CD4-positive, alpha-beta T cell (primary cell): ENCODE measurements at regions of chr7 and their contacts with region 1.

Region 1: DNA sequence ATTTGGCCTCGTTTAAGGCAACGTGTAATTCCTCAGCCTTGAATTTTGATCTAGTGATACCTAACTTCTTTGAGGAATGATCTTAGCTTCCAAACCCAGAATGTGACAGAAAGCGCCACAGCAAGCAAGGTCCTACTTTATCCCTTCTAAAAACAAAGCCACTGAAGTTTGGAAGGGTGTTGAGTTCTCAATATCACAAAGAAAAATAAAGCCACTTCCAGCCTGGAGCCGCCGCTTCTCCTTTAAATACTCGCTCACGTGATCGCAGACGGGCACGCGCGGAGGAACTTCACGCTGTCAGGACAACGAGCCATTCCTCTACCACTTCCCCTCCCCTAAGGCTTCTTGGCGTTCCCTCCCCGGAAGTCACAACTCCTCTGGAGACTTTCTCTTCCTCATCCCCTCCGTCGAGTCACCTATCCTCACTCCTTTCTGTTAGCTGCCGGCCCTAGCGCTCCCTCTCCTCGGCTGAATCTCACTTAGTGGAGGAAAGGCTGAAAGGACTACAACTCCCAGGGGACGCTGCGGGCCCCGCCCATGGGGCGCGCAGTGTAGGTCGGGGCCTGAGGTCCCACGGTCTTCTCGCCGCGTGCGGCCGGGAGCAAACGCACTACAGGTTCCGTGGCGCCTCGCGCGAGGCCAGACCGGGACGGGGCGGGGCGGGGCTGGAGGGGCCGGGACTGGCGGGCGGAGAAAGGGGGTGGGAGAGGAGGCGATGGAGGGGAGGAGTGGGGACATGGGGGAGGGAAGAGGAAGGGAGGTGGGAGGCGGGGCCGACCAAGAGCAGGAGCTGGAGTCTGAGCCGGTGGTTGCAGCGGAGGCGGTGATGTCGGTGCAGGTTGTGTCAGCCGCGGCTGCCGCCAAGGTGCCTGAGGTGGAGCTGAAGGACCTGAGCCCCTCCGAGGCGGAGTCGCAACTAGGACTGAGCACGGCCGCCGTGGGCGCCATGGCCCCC is at the start of gene AHCYL2:
- DNase-seq: peak; percentile 96 to 99 (median 98)
- ATAC-seq: peak; percentile 89
- H3K4me3 ChIP-seq: peak within 1 kb of the TSS; percentile 91
- H3K4me3 Mint-ChIP-seq: peak within 1 kb of the TSS; percentile 96
- H3K27ac ChIP-seq: peak within 1 kb of the TSS; percentile 72 to 97
- H3K27ac Mint-ChIP-seq: peak within 1 kb of the TSS; percentile 89
- H3K4me1 ChIP-seq: peaks cover 25% of the 10 kb centered on the region
- H3K4me1 Mint-ChIP-seq: peaks cover 56% of the 10 kb centered on the region
- H3K27me3 ChIP-seq: no peaks in the 10 kb centered on the region
- H3K27me3 Mint-ChIP-seq: no peaks in the 10 kb centered on the region
- CTCF ChIP-seq: no peak
- total RNA-seq, gene AHCYL2: 5.8 to 6.0 TPM

Region 2: DNA sequence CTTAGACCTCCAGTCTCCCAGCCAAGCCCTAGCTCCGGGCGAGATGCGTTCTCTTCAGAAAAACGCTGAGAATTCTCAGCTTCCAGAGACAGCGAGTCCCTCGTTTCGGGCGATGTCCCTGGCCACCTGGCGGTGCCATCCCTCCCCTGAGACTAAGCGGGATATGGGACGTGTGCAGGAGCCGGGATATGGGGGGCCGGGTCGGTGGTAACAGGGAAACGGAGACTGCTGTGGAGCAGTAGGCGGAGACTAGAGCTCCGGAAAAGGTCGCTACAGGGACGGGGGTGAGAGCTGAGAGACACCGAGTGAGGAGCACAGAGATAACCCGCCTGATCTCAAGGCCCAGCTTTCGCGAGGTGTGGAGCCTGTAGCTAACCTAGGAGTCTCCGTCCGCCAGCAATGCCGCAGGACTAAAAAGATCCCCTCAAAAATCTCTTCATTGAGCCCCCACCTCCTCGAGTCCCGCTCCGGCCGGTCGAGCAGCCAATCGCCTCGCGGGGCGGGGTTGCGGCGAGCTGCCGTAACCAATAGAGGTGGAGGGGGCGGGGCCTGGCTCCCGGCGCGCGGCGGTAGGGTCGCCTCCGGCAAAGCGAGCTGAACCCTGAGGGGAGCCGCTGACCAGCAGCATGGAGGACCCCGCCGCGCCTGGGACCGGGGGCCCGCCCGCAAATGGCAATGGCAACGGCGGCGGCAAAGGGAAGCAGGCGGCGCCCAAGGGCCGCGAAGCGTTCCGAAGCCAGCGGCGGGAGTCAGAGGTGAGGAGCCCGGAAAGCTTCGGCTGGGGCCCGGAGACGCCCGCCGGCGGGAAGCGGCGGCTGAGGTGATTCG is 209.5 kb after region 1 on chr7 and contains the start of gene STRIP2:
- CTCF ChIA-PET with region 1: no interaction called
- POLR2A ChIA-PET with region 1: no interaction called
- intact Hi-C with region 1: loop called in 1 of 2 experiments (anchors 5 kb)
- DNase-seq: peak; percentile 68 to 92 (median 84)
- ATAC-seq: peak; percentile 94
- H3K4me3 ChIP-seq: peak within 1 kb of the TSS; percentile 88
- H3K4me3 Mint-ChIP-seq: peak within 1 kb of the TSS; percentile 95
- H3K27ac ChIP-seq: no peak within 1 kb of the TSS
- H3K27ac Mint-ChIP-seq: peak within 1 kb of the TSS; percentile 34
- H3K4me1 ChIP-seq: peaks cover 19% of the 10 kb centered on the region
- H3K4me1 Mint-ChIP-seq: peaks cover 23% of the 10 kb centered on the region
- H3K27me3 ChIP-seq: peaks cover 15 to 30% of the 10 kb centered on the region in 2 experiments
- H3K27me3 Mint-ChIP-seq: peaks cover 35% of the 10 kb centered on the region
- CTCF ChIP-seq: peak; percentile 16
- total RNA-seq, gene STRIP2: 0.11 to 0.14 TPM

Region 3: GRCh38 chr7:129454249-129454551 is 229.7 kb after region 1 on chr7:
- CTCF ChIA-PET with region 1: no interaction called
- POLR2A ChIA-PET with region 1: no interaction called
- intact Hi-C with region 1: no loop called
- DNase-seq: no peak
- ATAC-seq: no peak
- H3K4me3 ChIP-seq: no peak overlapping the region
- H3K4me3 Mint-ChIP-seq: no peak overlapping the region
- H3K27ac ChIP-seq: no peak overlapping the region
- H3K27ac Mint-ChIP-seq: no peak overlapping the region
- H3K4me1 ChIP-seq: no peaks in the 10 kb centered on the region
- H3K4me1 Mint-ChIP-seq: no peaks in the 10 kb centered on the region
- H3K27me3 ChIP-seq: no peaks in the 10 kb centered on the region
- H3K27me3 Mint-ChIP-seq: no peaks in the 10 kb centered on the region
- CTCF ChIP-seq: no peak